CD4-positive, alpha-beta memory T cell (primary cell): ENCODE measurements at regions of chr3 and their contacts with region 1.

Region 1: DNA sequence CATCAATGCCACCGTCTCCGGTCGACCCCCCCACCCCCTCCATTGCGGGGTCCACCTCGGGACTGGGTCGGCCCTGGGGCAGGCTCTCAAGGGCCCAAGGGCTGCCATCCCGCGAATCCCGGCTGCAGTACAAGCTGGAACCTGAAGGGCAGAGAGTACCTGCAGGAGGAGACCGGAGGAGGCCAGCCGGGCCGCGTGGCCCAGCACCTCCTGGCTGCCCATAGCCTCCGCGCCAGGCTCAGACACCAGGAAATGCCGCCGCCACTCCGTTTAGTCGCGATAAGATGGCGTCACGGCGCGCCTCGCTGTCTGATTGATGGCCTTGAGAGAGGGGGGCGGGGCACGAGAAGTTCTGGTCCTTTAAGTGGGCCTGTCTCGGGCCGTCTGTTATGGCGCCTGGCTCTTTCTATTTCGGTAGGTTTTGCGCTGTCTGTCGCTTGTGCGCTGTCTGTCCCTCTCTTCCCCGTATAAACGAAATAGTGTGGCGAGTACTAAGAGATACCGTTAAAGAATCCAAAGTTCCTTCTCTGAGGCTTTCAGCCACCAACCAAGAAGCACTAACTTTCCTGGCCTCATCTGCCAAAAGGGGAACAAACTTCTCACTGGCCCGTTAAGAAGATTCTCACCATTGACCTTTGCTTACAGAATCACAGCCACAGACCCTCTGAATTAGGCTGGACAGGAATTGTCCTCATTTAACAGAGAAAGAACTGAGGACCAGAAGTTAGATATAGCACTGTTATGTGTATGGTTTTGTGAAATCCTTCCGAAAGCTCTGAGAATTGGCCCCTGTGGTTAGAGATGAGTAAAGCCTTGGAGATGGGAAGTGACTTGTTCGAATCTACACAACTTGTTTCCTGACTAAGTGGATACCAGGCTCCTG is at the start of gene RFT1:
- DNase-seq: peak; percentile 96 to 98 (median 97)
- H3K4me3 ChIP-seq: peak within 1 kb of the TSS; percentile 66 to 77
- H3K4me3 Mint-ChIP-seq: peak within 1 kb of the TSS; percentile 88 to 93 (median 91)
- H3K27ac ChIP-seq: peak within 1 kb of the TSS; percentile 83
- H3K27ac Mint-ChIP-seq: peak within 1 kb of the TSS; percentile 96 to 100 (median 99)
- H3K4me1 ChIP-seq: peaks cover 20% of the 10 kb centered on the region
- H3K4me1 Mint-ChIP-seq: peaks cover 18 to 31% (median 25%) of the 10 kb centered on the region in 4 donors
- H3K27me3 ChIP-seq: no peaks in the 10 kb centered on the region
- H3K27me3 Mint-ChIP-seq: no peaks in the 10 kb centered on the region
- total RNA-seq, gene RFT1: 25.3 to 28.4 TPM

Region 2: DNA sequence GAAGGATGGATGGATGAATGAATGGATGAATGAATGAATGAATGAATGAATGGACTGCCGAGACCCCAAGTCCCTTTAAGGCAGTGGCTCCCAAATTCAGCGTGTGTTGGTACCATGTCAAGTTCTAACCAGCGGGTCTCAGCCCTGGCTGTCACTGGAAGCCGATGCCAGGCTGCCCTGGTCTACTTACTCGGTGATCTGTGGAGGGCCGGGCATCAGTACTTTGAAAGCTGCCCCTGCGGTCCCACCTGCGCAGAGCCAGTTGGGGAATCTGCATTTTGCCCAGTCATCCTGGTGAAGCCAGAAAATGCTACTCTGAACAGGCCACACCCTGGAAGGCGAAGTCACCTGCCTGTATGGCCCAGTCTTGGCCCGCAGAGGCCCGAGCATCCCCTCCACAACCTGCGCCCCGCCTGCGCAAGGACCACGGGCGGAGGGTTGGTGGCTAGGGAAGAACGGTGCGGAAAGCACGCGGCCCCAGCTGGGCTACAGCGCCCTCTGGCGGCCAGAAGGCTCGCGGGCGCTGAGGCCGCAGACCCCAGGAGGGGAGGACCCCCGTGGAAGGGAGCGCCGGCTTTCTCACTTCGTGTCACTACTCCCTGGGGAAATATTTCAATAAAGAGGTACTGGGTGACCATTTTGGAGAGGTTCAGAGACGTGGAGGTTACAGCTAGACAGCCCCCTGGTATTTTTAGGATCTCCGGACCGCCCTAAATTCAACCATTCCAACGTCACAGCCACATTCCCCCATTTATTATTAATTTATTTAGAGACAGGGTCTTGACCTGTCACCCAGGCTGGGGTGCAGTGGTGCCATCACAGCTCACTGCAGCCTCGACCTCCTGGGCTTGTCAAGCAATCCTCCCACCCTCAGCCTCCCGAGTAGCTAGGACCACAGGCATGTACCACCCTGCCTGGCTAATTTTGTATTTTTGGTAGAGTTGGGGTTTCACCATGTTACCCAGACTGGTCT is 65.5 kb after region 1 on chr3:
- CTCF ChIA-PET with region 1: interaction called, 86 read pairs
- POLR2A ChIA-PET with region 1: interaction called, 8 read pairs
- intact Hi-C with region 1: loop called (anchors 1 kb)
- DNase-seq: peak; percentile 43 to 63 (median 49)
- H3K4me3 ChIP-seq: no peak overlapping the region
- H3K4me3 Mint-ChIP-seq: peak overlapping the region in 1 of 8 donors; percentile 18
- H3K27ac ChIP-seq: no peak overlapping the region
- H3K27ac Mint-ChIP-seq: peak overlapping the region in 2 of 7 donors; percentile 53 to 73
- H3K4me1 ChIP-seq: peaks cover 8% of the 10 kb centered on the region
- H3K4me1 Mint-ChIP-seq: peaks cover 2 to 9% (median 6%) of the 10 kb centered on the region in 4 donors
- H3K27me3 ChIP-seq: no peaks in the 10 kb centered on the region
- H3K27me3 Mint-ChIP-seq: peaks cover 0 to 5% of the 10 kb centered on the region in 2 donors